ENCODE measurements at regions of chrX and their contacts with region 1.

Region 1: DNA sequence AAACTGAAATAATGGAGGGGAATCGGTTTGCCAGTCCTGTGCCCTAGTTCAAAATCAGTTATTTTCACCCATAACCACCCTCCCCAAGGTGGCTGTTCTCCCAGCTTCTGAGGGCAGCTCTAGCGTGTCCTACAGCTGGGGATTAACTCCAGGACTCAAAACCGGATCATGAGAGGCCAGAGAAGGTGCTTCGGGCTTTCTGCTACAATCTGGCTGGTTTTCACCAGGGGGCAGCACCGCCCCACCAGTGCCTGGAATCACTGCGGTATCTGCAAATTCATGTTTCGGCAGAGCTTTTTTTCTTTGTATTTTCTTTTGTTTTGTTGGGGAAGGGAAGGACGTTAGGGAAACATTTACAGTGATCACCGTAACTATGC is 28.4 kb downstream of the PDHA1 start:
- DNase-seq: peak; percentile 80
- H3K4me3 Mint-ChIP-seq: peak overlapping the region; percentile 73
- H3K27ac Mint-ChIP-seq: no peak overlapping the region
- H3K4me1 Mint-ChIP-seq: peaks cover 2% of the 10 kb centered on the region
- H3K27me3 Mint-ChIP-seq: no peaks in the 10 kb centered on the region

Region 2: GRCh38 chrX:19514791-19515614 is 142.8 kb after region 1 on chrX and contains the start of gene MAP3K15:
- CTCF ChIA-PET with region 1: interaction called, 3 read pairs
- POLR2A ChIA-PET with region 1: no interaction called
- intact Hi-C with region 1: loop called (anchors 2 kb)
- DNase-seq: peak; percentile 22
- H3K4me3 Mint-ChIP-seq: peak within 1 kb of the TSS; percentile 62
- H3K27ac Mint-ChIP-seq: no peak within 1 kb of the TSS
- H3K4me1 Mint-ChIP-seq: no peaks in the 10 kb centered on the region
- H3K27me3 Mint-ChIP-seq: peaks cover 17% of the 10 kb centered on the region
- total RNA-seq, gene MAP3K15: 0.31 to 0.69 TPM

Region 3: DNA sequence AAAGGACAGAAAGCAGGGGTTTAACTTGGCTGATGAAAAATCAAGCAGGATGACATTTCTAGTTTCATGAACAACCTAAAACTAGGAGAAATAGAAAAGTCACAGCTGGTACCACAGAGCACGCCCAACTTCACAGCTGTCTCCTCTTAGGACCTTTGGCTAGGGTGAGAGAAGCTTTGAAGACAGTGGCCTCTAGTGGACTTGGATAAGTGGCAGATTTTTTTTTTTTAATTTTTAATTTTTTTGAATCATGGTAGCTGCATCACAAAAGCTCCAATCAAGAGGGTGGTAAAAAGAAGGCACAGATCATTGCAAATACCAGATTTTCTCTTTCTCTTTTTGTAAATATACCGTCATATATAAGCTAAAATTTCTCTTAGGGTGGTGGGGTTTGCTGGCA is 163.3 kb after region 1 on chrX:
- CTCF ChIA-PET with region 1: interaction called, 12 read pairs
- POLR2A ChIA-PET with region 1: no interaction called
- intact Hi-C with region 1: loop called (anchors 5 kb)
- DNase-seq: no peak
- H3K4me3 Mint-ChIP-seq: no peak overlapping the region
- H3K27ac Mint-ChIP-seq: no peak overlapping the region
- H3K4me1 Mint-ChIP-seq: no peaks in the 10 kb centered on the region
- H3K27me3 Mint-ChIP-seq: no peaks in the 10 kb centered on the region

Region 4: DNA sequence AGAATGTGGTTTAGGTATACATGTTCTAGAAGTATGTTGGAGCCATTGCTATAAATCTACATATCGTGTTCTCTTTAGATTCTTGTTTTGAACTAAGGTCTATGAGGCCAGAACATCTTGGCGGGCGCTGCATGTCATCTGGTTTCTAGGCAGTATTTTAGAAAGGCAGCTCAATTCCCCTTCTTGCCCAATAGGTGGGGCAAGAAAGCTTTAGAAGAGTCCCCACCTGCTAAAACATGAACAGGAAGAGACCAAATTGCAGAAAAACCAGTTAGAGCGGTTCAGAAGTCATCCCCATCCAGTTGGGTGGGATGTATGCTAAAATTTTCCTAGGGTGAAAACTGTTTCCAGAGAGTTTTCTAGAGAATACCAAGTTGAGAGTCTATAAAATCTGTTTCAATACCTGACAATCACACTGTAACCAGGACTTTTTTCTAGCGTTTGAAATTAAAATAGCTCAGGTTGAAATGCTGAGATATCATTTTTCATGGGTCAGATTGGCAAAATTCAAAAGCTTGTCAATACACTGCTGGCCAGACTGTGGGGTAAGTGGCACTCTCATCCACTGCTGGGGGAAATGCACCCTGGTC is 532.7 kb after region 1 on chrX:
- CTCF ChIA-PET with region 1: interaction called, 5 read pairs
- POLR2A ChIA-PET with region 1: no interaction called
- intact Hi-C with region 1: loop called (anchors 5 kb)
- DNase-seq: peak; percentile 15
- H3K4me3 Mint-ChIP-seq: no peak overlapping the region
- H3K27ac Mint-ChIP-seq: no peak overlapping the region
- H3K4me1 Mint-ChIP-seq: peaks cover 15% of the 10 kb centered on the region
- H3K27me3 Mint-ChIP-seq: no peaks in the 10 kb centered on the region

Region 5: GRCh38 chrX:20066968-20067708 is 695.0 kb after region 1 on chrX:
- CTCF ChIA-PET with region 1: interaction called, 7 read pairs
- POLR2A ChIA-PET with region 1: no interaction called
- intact Hi-C with region 1: loop called (anchors 2 kb)
- DNase-seq: peak; percentile 13
- H3K4me3 Mint-ChIP-seq: no peak overlapping the region
- H3K27ac Mint-ChIP-seq: no peak overlapping the region
- H3K4me1 Mint-ChIP-seq: no peaks in the 10 kb centered on the region
- H3K27me3 Mint-ChIP-seq: no peaks in the 10 kb centered on the region

Region 6: GRCh38 chrX:20128670-20129069 is 756.5 kb after region 1 on chrX:
- CTCF ChIA-PET with region 1: no interaction called
- POLR2A ChIA-PET with region 1: no interaction called
- intact Hi-C with region 1: loop called (anchors 10 kb)
- DNase-seq: no peak
- H3K4me3 Mint-ChIP-seq: no peak overlapping the region
- H3K27ac Mint-ChIP-seq: no peak overlapping the region
- H3K4me1 Mint-ChIP-seq: no peaks in the 10 kb centered on the region
- H3K27me3 Mint-ChIP-seq: no peaks in the 10 kb centered on the region